CD4-positive, alpha-beta memory T cell (primary cell): ENCODE measurements at regions of chr17 and their contacts with region 1.

Region 1: GRCh38 chr17:2253768-2254406 is 49.7 kb downstream of the SMG6 start:
- DNase-seq: peak in 1 of 5 donors; percentile 18
- H3K4me3 ChIP-seq: no peak overlapping the region
- H3K4me3 Mint-ChIP-seq: peak overlapping the region in 3 of 8 donors; percentile 24 to 61 (median 57)
- H3K27ac ChIP-seq: no peak overlapping the region
- H3K27ac Mint-ChIP-seq: peak overlapping the region; percentile 43 to 87 (median 82)
- H3K4me1 ChIP-seq: peaks cover 26% of the 10 kb centered on the region
- H3K4me1 Mint-ChIP-seq: peaks cover 25 to 61% (median 37%) of the 10 kb centered on the region in 4 donors
- H3K27me3 ChIP-seq: no peaks in the 10 kb centered on the region
- H3K27me3 Mint-ChIP-seq: no peaks in the 10 kb centered on the region

Region 2: DNA sequence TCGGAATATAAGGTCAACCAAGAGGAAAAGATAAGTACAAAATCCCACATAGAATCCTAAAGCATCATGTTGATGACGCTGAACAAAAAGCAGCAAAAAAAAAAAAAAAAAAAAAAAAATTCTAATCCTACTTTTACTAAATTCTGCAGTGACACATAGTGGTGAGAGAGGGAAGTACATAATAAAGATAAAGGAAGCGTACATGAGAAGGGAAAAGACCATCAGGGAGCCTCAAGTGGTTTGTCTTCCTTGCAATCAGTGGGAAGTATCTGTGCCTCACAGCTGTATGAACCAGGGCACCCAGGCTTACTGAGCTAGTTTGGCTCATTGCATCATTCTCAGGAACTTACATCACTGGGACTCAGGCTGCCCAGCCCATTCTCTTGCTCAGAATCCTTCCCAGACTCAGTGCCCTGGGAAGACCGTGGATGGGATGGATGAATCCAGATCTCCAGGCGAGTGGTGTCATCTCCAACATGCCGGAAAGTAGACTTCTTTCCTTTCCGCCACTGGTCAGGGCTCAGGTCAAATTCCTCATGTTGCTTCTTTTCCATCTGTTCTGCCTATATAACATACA is 28.5 kb after region 1 on chr17:
- CTCF ChIA-PET with region 1: interaction called, 10 read pairs
- POLR2A ChIA-PET with region 1: no interaction called
- intact Hi-C with region 1: no loop called
- DNase-seq: peak in 4 of 5 donors; percentile 52 to 66 (median 58)
- H3K4me3 ChIP-seq: no peak overlapping the region
- H3K4me3 Mint-ChIP-seq: no peak overlapping the region
- H3K27ac ChIP-seq: no peak overlapping the region
- H3K27ac Mint-ChIP-seq: peak overlapping the region; percentile 8 to 88 (median 84)
- H3K4me1 ChIP-seq: peaks cover 8% of the 10 kb centered on the region
- H3K4me1 Mint-ChIP-seq: peaks cover 1 to 18% (median 15%) of the 10 kb centered on the region in 4 donors
- H3K27me3 ChIP-seq: no peaks in the 10 kb centered on the region
- H3K27me3 Mint-ChIP-seq: no peaks in the 10 kb centered on the region